ENCODE measurements at regions of chr16 and their contacts with region 1.

Region 1: GRCh38 chr16:89670496-89671431 is 13.1 kb downstream of the SPATA33 start:
- DNase-seq: no peak
- ATAC-seq: peak; percentile 38 to 49; a peak in 4 of 6 replicates
- H3K4me3 ChIP-seq: no peak overlapping the region
- H3K27ac ChIP-seq: no peak overlapping the region
- H3K4me1 ChIP-seq: no peaks in the 10 kb centered on the region
- CTCF ChIP-seq: no peak
- EP300 ChIP-seq: no peak
- POLR2A ChIP-seq: no peak
- RAD21 ChIP-seq: no peak

Region 2: GRCh38 chr16:89686520-89687091 is 15.8 kb after region 1 on chr16 and contains the start of gene CDK10:
- CTCF ChIA-PET with region 1: interaction called, 6 read pairs
- POLR2A ChIA-PET with region 1: interaction called, 10 read pairs
- DNase-seq: peak; percentile 87 to 89
- ATAC-seq: peak; percentile 81 to 89
- H3K4me3 ChIP-seq: peak within 1 kb of the TSS; percentile 70
- H3K27ac ChIP-seq: peak within 1 kb of the TSS; percentile 96 to 99
- H3K4me1 ChIP-seq: peaks cover 11% of the 10 kb centered on the region
- CTCF ChIP-seq: no peak
- EP300 ChIP-seq: no peak
- POLR2A ChIP-seq: peak; percentile 93
- RAD21 ChIP-seq: no peak
- polyA plus RNA-seq, gene CDK10: 35.9 and 40.2 TPM in 2 replicates

Region 3: DNA sequence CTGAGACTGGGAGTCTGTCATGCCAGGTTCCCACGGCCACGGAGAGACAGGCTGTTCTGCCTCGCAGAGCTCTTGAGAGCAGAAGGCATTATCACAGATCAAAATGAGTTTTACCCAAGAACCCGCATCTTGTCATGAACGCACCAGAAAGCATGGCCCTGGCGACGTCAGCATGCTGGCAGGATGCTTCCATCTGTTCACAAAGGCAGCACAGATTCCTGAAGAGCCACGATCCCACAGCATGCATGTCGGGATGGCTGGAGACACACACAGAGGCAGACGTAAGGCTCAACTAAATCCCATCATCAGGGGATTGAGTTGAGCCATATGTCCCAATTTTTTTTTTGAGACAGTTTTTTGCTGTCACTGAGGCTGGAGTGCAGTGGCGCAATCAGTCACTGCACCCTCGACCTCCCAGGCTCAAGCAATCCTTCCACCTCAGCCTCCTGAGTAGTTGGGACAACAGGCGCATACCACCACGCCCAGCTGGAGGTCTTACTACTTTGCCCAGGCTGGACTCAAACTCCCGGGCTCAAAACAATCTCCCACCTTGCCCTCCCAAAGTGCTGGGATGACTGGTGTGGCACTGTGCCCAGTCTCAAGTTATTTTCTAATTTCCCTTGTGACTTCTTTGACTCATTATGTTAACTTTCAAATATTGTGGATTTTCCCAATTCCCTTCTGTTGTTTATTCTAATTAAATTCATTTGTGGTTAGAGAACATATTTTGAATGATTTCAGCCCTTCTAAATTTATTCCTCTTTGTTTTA is 134.6 kb after region 1 on chr16:
- CTCF ChIA-PET with region 1: no interaction called
- POLR2A ChIA-PET with region 1: no interaction called
- DNase-seq: no peak
- ATAC-seq: no peak
- H3K4me3 ChIP-seq: no peak overlapping the region
- H3K27ac ChIP-seq: no peak overlapping the region
- H3K4me1 ChIP-seq: no peaks in the 10 kb centered on the region
- CTCF ChIP-seq: no peak
- EP300 ChIP-seq: no peak
- POLR2A ChIP-seq: no peak
- RAD21 ChIP-seq: no peak